Sciatic nerve (tissue), 2 donors: ENCODE measurements at regions of chr2 and their contacts with region 1.

Region 1: DNA sequence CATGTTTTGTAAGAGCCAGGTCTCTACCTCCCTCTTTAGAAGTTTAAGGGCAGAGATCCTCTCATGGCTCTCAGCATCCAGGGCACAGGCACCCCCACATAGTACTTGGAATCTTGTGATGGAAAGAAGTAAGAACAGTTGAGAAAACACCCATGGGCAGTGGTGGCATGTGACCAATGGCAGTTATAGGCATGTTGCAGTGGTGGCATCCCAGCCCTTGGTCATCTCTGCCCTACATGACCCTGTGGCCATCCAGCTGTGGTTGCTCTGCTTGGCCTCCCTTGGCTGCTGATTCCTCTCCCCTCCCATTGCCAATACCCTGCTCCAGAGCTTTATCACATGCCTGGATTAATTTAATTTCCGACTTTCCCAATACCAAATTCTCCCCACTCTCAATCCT is 13.3 kb upstream of the MSH2 start:
- DNase-seq: no peak
- ATAC-seq: no peak

Region 2: DNA sequence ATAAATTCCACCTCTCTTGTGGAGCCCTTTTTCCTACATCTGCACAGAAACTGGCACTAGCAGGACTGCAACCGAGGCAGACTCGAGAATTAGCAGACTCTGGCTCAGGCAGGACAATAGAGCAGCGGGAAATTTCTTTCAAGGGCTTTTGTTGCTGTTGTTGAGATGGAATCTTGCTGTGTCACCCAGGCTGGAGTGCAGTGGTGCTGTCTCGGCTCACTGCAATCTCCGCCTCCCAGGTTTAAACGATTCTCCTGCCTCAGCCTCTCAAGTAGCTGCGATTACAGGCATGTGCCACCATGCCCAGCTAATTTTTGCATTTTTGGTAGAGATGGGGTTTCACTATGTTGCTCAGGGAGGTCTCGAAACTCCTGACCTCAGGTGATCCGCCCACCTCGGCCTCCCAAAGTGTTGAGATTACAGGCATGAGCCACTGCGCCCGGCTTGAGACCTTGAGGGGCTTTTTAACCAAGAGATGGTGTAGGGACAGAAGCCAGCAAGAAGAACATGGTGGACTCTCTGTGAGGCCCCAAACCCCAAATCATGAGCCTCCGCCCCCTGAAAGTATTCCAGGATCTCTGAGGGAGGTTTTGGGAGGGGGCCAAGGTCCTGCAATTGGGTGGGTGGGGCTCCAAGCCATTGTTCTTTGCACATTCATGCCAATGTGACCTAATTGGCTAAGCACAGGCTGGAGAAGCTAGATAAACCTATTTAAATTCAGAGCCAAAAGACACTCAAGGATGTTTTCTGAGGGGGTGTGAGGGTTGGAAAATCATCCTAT is 55.1 kb before region 1 on chr2:
- intact Hi-C with region 1: loop called (anchors 2 kb)
- DNase-seq: no peak
- ATAC-seq: no peak